ENCODE measurements at regions of chr16 and their contacts with region 1.

Region 1: DNA sequence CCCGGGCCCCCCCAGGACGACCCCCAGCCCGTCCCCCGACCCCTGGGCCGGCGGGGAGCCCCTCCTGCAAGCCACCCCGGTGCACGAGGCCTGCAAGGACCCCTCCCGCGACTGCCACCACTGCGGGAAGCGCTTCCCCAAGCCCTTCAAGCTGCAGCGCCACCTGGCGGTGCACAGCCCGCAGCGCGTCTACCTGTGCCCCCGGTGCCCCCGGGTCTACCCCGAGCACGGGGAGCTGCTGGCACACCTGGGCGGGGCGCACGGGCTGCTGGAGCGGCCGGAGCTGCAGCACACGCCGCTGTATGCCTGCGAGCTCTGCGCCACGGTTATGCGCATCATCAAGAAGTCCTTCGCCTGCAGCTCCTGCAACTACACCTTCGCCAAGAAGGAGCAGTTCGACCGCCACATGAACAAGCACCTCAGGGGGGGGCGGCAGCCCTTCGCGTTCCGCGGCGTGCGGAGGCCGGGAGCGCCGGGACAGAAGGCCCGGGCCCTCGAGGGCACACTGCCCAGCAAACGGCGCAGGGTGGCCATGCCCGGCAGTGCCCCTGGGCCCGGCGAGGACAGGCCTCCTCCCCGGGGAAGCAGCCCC is 15.6 kb upstream of the ZFPM1 start:
- DNase-seq: peak; percentile 51
- H3K4me3 ChIP-seq: no peak overlapping the region
- H3K27ac ChIP-seq: no peak overlapping the region
- H3K4me1 ChIP-seq: no peaks in the 10 kb centered on the region
- H3K27me3 ChIP-seq: peaks cover 66% of the 10 kb centered on the region
- CTCF ChIP-seq: peak; percentile 91

Region 2: GRCh38 chr16:87918866-87919680 is 518.4 kb before region 1 on chr16:
- intact Hi-C with region 1: no loop called
- DNase-seq: peak; percentile 63
- H3K4me3 ChIP-seq: peak overlapping the region; percentile 11
- H3K27ac ChIP-seq: peak overlapping the region; percentile 8
- H3K4me1 ChIP-seq: peaks cover 17% of the 10 kb centered on the region
- H3K27me3 ChIP-seq: peaks cover 4% of the 10 kb centered on the region
- CTCF ChIP-seq: no peak

Region 3: DNA sequence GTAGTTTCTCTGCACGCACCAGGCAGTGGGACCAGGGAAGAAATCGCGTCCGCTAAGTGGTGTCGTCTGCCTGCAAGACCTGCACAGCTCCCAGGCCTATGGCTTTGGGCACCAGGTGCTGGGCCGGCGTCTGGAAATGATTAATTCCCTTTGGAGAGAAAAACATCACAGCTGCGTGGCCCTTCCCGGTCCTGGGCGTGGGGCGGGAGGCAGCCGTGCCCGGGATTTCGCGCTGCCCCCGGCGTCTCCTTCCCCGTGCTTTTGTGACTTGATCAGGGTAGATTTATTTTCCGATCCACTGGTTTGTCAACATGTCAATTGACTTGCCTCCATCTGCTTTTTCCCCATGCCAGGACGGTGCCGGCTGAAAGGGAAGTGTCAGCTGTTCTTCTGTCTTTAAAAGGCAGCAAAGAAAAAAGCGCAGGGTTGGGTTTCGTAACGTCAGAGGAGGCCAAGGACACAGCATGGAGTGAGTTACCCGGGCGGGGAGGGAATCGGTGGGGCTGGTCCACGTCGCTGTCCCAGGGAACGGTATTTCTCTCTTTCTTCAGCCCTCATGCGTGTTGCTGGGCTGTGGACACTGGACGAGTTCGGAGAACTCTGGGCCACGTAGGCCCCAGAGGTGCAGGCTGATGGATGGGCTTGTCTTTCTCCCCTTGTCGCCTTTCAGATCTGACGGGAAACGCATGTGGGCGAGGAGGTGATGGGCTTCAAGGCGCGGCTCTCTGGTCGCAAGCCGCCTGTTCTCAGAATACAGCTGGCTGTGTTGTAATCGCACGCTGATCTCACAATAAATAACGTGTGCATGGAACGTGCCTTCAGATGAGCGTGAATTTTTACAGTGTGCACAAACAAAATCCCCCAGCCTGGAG is 242.8 kb before region 1 on chr16:
- intact Hi-C with region 1: loop called (anchors 10 kb)
- DNase-seq: no peak
- H3K4me3 ChIP-seq: no peak overlapping the region
- H3K27ac ChIP-seq: no peak overlapping the region
- H3K4me1 ChIP-seq: no peaks in the 10 kb centered on the region
- H3K27me3 ChIP-seq: no peaks in the 10 kb centered on the region
- CTCF ChIP-seq: no peak

Region 4: DNA sequence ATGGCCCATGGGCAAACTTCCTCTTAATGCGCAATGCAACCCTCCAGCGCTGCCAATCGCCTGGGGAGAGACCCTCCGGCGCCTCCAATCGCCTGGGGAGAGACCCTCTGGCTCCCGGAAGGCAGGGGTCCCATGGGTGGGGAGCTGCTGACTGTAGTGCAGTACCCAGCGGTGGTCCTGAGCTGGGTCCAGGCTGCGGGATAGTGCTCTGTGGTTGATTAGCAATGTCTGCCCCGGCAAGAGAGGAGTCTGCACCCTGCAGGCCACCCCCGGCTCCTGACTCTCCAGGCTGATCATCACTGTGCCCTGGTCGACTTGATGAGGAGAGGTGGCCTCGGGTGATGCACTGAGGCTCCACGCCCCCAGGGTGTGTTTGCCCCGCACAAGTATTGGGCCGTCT is 99.4 kb before region 1 on chr16:
- intact Hi-C with region 1: no loop called
- DNase-seq: no peak
- H3K4me3 ChIP-seq: no peak overlapping the region
- H3K27ac ChIP-seq: no peak overlapping the region
- H3K4me1 ChIP-seq: no peaks in the 10 kb centered on the region
- H3K27me3 ChIP-seq: peaks cover 38% of the 10 kb centered on the region
- CTCF ChIP-seq: no peak